Right lobe of liver (tissue), 6 donors: ENCODE measurements at regions of chr20 and their contacts with region 1.

Region 1: GRCh38 chr20:2643708-2644107 is 8.7 kb upstream of the NOP56 start:
- DNase-seq: no peak
- ATAC-seq: no peak
- H3K4me3 ChIP-seq: no peak overlapping the region
- H3K27ac ChIP-seq: no peak overlapping the region
- H3K4me1 ChIP-seq: no peaks in the 10 kb centered on the region
- H3K27me3 ChIP-seq: no peaks in the 10 kb centered on the region
- CTCF ChIP-seq: no peak
- POLR2A ChIP-seq: no peak

Region 2: GRCh38 chr20:2538931-2539720 is 104.6 kb before region 1 on chr20:
- intact Hi-C with region 1: loop called in 1 of 2 experiments (anchors 10 kb)
- DNase-seq: no peak
- ATAC-seq: no peak
- H3K4me3 ChIP-seq: no peak overlapping the region
- H3K27ac ChIP-seq: no peak overlapping the region
- H3K4me1 ChIP-seq: no peaks in the 10 kb centered on the region
- H3K27me3 ChIP-seq: no peaks in the 10 kb centered on the region
- CTCF ChIP-seq: no peak
- POLR2A ChIP-seq: no peak